Ovary (tissue), 10 donors: ENCODE measurements at regions of chr22 and their contacts with region 1.

Region 1: DNA sequence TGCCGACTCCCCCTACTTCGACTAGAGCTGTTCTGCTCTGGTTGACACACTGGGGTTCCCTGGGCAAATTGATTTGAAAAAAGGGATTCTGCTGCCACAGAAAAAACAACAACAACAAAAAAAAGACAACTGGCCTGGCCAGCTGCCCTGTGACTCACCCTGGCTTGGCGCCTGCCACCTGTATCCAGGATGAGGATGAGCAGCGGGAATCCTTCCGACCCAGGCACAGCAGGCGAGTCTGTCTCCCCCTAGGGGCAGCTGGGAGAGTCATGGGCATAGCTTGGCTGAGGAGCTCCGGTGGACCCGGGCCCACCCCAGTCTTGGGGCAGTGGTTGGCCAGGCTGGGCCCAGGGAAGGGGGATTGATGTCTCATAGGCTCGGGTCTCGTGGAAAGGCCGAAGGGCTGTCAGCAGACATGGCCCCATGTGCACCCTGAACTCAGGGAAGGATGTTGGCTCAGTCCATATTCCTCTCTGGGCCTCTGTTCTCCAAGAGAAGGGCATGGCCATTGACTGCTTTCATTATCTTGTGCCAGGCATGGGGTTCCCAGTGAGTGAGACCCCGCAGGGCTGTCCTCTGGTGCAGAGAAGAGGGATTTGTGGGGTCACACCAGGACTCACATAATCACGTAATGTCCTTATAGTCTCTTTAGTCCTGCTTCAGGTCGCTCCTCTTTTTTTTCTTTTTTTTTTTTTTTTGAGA is 10.4 kb upstream of the SUN2 start:
- DNase-seq: peak; percentile 61 to 78 (median 64)
- H3K4me3 ChIP-seq: no peak overlapping the region
- H3K27ac ChIP-seq: no peak overlapping the region
- H3K4me1 ChIP-seq: peaks cover 7% of the 10 kb centered on the region
- H3K27me3 ChIP-seq: no peaks in the 10 kb centered on the region
- CTCF ChIP-seq: peak in 2 of 3 donors; percentile 43 to 53
- EP300 ChIP-seq: no peak
- POLR2A ChIP-seq: no peak

Region 2: GRCh38 chr22:38981992-38982927 is 216.0 kb after region 1 on chr22 and contains the start of gene APOBEC3B:
- intact Hi-C with region 1: loop called in 1 of 4 experiments (anchors 10 kb)
- DNase-seq: peak; percentile 74 to 90 (median 87)
- H3K4me3 ChIP-seq: peak within 1 kb of the TSS; percentile 43
- H3K27ac ChIP-seq: peak within 1 kb of the TSS in 1 of 2 donors; percentile 52
- H3K4me1 ChIP-seq: peaks cover 4% of the 10 kb centered on the region
- H3K27me3 ChIP-seq: no peaks in the 10 kb centered on the region
- CTCF ChIP-seq: no peak
- EP300 ChIP-seq: no peak
- POLR2A ChIP-seq: no peak
- total RNA-seq, gene APOBEC3B: 0.43 to 1.9 (median 1.4) TPM in 6 of 7 donors, not detected in the other